MCF 10A (cell line): ENCODE measurements at regions of chr10 and their contacts with region 1.

Region 1: GRCh38 chr10:9608602-9609001 is 1409.1 kb upstream of the CELF2 start:
- DNase-seq: peak; percentile 27
- H3K4me3 Mint-ChIP-seq: no peak overlapping the region
- H3K27ac Mint-ChIP-seq: no peak overlapping the region
- H3K4me1 Mint-ChIP-seq: peaks cover 29% of the 10 kb centered on the region
- H3K27me3 Mint-ChIP-seq: no peaks in the 10 kb centered on the region
- CTCF ChIP-seq: peak; percentile 55

Region 2: GRCh38 chr10:9762966-9763656 is 154.5 kb after region 1 on chr10:
- CTCF ChIA-PET with region 1: no interaction called
- POLR2A ChIA-PET with region 1: no interaction called
- intact Hi-C with region 1: loop called (anchors 2 kb)
- DNase-seq: peak; percentile 78
- H3K4me3 Mint-ChIP-seq: peak overlapping the region; percentile 48
- H3K27ac Mint-ChIP-seq: peak overlapping the region; percentile 84
- H3K4me1 Mint-ChIP-seq: peaks cover 17% of the 10 kb centered on the region
- H3K27me3 Mint-ChIP-seq: no peaks in the 10 kb centered on the region
- CTCF ChIP-seq: no peak

Region 3: GRCh38 chr10:10233229-10233628 is 624.6 kb after region 1 on chr10:
- CTCF ChIA-PET with region 1: no interaction called
- POLR2A ChIA-PET with region 1: no interaction called
- intact Hi-C with region 1: loop called (anchors 10 kb)
- DNase-seq: peak; percentile 6
- H3K4me3 Mint-ChIP-seq: no peak overlapping the region
- H3K27ac Mint-ChIP-seq: no peak overlapping the region
- H3K4me1 Mint-ChIP-seq: peaks cover 34% of the 10 kb centered on the region
- H3K27me3 Mint-ChIP-seq: no peaks in the 10 kb centered on the region
- CTCF ChIP-seq: peak; percentile 11

Region 4: DNA sequence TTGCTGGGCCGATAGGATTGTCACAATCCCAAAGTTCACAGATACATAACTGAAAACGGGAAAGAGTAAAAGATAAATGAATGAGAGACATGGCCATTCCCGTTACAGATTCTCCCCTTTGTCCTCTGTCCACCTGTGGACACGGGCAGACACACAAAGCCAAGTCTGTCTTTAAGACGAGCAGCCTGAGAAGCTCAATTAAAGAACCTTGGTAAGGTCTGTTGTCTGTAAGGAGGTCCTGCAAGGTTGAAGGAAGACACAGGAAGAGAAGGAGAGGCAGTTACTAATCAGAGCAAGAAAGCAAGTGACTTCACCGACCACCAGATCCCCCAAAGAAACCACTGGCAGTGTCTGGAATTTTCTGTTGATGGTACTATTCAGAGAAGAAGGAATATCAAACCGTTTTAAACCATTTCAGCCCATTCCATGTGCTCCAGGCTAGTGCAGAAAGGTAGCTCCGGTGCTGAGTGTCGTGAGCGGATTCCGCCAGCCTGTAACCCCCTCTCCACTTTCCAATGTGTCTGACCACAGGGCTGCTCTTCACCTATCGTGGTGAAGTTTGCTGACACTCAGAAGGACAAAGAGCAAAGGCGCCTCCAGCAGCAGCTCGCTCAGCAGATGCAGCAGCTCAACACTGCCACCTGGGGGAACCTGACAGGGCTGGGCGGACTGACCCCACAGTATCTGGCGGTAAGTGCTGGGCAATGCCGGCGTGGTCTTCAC is 1661.7 kb after region 1 on chr10:
- CTCF ChIA-PET with region 1: interaction called, 3 read pairs
- POLR2A ChIA-PET with region 1: no interaction called
- intact Hi-C with region 1: loop called (anchors 2 kb)
- DNase-seq: peak; percentile 65
- H3K4me3 Mint-ChIP-seq: no peak overlapping the region
- H3K27ac Mint-ChIP-seq: no peak overlapping the region
- H3K4me1 Mint-ChIP-seq: no peaks in the 10 kb centered on the region
- H3K27me3 Mint-ChIP-seq: peaks cover 38% of the 10 kb centered on the region
- CTCF ChIP-seq: peak; percentile 81